ENCODE measurements at regions of chrX and their contacts with region 1.

Region 1: DNA sequence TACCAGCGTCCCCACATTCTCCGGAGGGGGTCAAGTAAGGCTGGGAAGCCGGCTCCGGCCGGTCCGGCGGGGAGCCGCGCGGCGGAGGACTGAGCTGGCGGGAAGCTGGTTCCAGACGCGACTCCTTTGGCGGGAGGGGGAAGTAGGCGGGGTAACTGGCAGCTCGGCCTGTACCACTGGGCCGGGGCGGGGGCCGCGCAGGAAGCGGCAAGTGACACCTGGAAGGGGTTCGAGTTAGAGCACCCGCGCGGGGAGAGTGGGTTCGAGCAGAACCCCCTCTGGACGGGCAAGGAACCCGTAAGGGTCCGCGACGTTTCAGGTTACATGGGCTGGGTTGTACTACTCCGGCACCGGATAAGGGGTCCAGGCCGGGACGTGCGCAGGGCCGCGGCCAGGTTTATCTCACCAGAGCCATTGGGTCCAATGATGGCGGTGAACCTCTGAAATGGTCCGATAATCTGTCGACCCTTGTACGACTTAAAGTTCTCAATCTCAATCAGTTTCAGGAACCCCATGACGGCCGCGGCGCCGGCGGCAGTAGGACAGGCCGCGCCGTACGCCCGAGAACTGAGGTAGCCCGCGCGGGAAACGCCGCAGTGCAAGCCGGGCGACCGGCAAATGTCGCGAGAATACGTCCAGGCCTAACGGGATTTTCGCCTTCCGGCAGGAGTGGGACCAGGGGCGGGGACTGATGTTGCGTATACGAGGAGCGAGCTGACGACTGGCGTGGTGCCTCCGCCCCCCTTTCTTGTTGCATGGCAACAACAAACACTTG is at the start of gene SMC1A:
- DNase-seq: peak; percentile 85 to 99 (median 95)
- ATAC-seq: peak; percentile 87
- H3K4me3 ChIP-seq: peak within 1 kb of the TSS; percentile 93
- H3K4me3 Mint-ChIP-seq: peak within 1 kb of the TSS; percentile 99
- H3K27ac ChIP-seq: peak within 1 kb of the TSS; percentile 90 to 98
- H3K27ac Mint-ChIP-seq: peak within 1 kb of the TSS; percentile 90
- H3K4me1 ChIP-seq: peaks cover 34% of the 10 kb centered on the region
- H3K4me1 Mint-ChIP-seq: peaks cover 28% of the 10 kb centered on the region
- H3K27me3 ChIP-seq: no peaks in the 10 kb centered on the region
- H3K27me3 Mint-ChIP-seq: no peaks in the 10 kb centered on the region
- CTCF ChIP-seq: no peak
- total RNA-seq, gene SMC1A: 25.5 to 28.6 TPM

Region 2: DNA sequence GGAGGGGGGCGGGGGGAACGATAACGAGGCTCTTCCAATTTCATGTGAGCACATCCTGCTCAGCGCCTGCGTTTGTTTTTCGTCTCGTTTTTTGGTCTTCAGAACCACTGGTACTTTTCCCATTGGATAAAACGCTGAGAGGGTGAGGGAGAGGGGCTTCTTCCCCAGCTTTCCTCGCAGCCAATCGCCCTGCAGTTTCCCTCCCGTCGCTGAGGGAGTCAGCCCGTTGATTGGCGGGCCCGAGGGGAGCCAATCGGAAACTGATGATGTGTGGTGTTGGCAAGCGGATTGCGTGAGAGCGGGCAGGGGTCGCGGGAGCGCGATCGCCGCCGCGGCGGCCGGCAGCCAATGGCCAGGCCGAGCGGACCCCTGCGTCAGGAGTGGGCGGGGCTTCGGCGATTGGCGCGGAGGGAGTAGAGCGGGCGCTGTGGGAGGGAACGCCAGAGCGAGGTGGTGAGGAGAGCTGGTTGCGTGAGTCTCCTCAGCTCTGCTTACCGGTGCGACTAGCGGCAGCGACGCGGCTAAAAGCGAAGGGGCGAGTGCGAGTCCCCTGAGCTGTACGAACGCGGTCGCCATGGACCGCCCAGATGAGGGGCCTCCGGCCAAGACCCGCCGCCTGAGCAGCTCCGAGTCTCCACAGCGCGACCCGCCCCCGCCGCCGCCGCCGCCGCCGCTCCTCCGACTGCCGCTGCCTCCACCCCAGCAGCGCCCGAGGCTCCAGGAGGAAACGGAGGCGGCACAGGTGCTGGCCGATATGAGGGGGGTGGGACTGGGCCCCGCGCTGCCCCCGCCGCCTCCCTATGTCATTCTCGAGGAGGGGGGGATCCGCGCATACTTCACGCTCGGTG is 340.1 kb before region 1 on chrX and contains the start of gene TSPYL2:
- CTCF ChIA-PET with region 1: no interaction called
- POLR2A ChIA-PET with region 1: interaction called, 13 read pairs
- intact Hi-C with region 1: no loop called
- DNase-seq: peak; percentile 88 to 97 (median 92)
- ATAC-seq: peak; percentile 85
- H3K4me3 ChIP-seq: peak within 1 kb of the TSS; percentile 77
- H3K4me3 Mint-ChIP-seq: peak within 1 kb of the TSS; percentile 95
- H3K27ac ChIP-seq: peak within 1 kb of the TSS; percentile 59 to 80
- H3K27ac Mint-ChIP-seq: peak within 1 kb of the TSS; percentile 99
- H3K4me1 ChIP-seq: peaks cover 30% of the 10 kb centered on the region
- H3K4me1 Mint-ChIP-seq: peaks cover 62% of the 10 kb centered on the region
- H3K27me3 ChIP-seq: no peaks in the 10 kb centered on the region
- H3K27me3 Mint-ChIP-seq: no peaks in the 10 kb centered on the region
- CTCF ChIP-seq: no peak
- total RNA-seq, gene TSPYL2: 428 to 461 TPM

Region 3: DNA sequence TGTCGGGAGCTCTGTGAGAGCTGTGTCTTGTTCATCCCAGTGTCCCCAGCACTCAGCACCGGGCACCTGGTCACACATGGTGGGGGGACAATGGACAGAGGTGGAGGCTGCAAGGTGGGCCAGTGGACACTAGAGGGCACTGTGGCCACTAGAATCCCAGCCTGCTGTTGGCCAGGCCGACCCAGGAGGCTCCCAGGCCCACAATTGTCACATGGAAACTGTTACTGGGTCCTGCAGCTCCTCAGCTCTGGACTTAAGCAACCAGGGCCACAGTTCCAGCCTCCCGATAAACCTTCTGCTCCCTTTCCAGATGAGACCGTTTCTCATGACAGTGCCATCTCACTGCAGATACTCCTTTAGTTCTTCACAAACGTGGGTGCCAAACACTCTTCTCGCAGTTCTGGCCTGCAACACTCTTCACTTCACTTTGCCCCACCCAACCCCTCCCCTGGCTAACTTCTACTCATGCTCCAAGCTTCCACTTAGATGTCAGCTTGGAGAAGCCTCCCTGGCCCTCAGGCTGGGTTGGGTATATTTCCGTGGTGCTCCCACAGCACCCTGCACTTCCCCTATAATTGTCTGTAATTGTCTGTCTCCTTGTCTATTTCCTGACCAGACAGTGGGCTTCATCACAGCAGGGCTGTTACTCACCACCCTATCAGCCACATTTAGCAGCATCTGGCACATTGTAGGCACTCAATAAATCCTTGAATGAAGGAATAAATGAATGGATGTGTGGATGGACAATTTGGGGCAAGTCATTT is 137.4 kb before region 1 on chrX:
- CTCF ChIA-PET with region 1: interaction called, 3 read pairs
- POLR2A ChIA-PET with region 1: interaction called, 16 read pairs
- intact Hi-C with region 1: no loop called
- DNase-seq: peak in 13 of 14 experiments; percentile 11 to 71 (median 40)
- ATAC-seq: peak; percentile 57
- H3K4me3 ChIP-seq: no peak overlapping the region
- H3K4me3 Mint-ChIP-seq: no peak overlapping the region
- H3K27ac ChIP-seq: no peak overlapping the region
- H3K27ac Mint-ChIP-seq: no peak overlapping the region
- H3K4me1 ChIP-seq: peaks cover 38% of the 10 kb centered on the region
- H3K4me1 Mint-ChIP-seq: peaks cover 37% of the 10 kb centered on the region
- H3K27me3 ChIP-seq: no peaks in the 10 kb centered on the region
- H3K27me3 Mint-ChIP-seq: no peaks in the 10 kb centered on the region
- CTCF ChIP-seq: peak; percentile 66

Region 4: GRCh38 chrX:53445977-53446376 is 23.7 kb after region 1 on chrX:
- CTCF ChIA-PET with region 1: interaction called, 6 read pairs
- POLR2A ChIA-PET with region 1: interaction called, 10 read pairs
- intact Hi-C with region 1: no loop called
- DNase-seq: peak in 12 of 14 experiments; percentile 9 to 62 (median 34)
- ATAC-seq: peak; percentile 46
- H3K4me3 ChIP-seq: no peak overlapping the region
- H3K4me3 Mint-ChIP-seq: no peak overlapping the region
- H3K27ac ChIP-seq: no peak overlapping the region
- H3K27ac Mint-ChIP-seq: no peak overlapping the region
- H3K4me1 ChIP-seq: peaks cover 12% of the 10 kb centered on the region
- H3K4me1 Mint-ChIP-seq: peaks cover 5% of the 10 kb centered on the region
- H3K27me3 ChIP-seq: no peaks in the 10 kb centered on the region
- H3K27me3 Mint-ChIP-seq: no peaks in the 10 kb centered on the region
- CTCF ChIP-seq: peak; percentile 29

Region 5: GRCh38 chrX:54325713-54326112 is 903.4 kb after region 1 on chrX:
- CTCF ChIA-PET with region 1: no interaction called
- POLR2A ChIA-PET with region 1: no interaction called
- intact Hi-C with region 1: no loop called
- DNase-seq: no peak
- ATAC-seq: no peak
- H3K4me3 ChIP-seq: no peak overlapping the region
- H3K4me3 Mint-ChIP-seq: no peak overlapping the region
- H3K27ac ChIP-seq: no peak overlapping the region
- H3K27ac Mint-ChIP-seq: no peak overlapping the region
- H3K4me1 ChIP-seq: no peaks in the 10 kb centered on the region
- H3K4me1 Mint-ChIP-seq: no peaks in the 10 kb centered on the region
- H3K27me3 ChIP-seq: no peaks in the 10 kb centered on the region
- H3K27me3 Mint-ChIP-seq: no peaks in the 10 kb centered on the region
- CTCF ChIP-seq: no peak

Region 6: DNA sequence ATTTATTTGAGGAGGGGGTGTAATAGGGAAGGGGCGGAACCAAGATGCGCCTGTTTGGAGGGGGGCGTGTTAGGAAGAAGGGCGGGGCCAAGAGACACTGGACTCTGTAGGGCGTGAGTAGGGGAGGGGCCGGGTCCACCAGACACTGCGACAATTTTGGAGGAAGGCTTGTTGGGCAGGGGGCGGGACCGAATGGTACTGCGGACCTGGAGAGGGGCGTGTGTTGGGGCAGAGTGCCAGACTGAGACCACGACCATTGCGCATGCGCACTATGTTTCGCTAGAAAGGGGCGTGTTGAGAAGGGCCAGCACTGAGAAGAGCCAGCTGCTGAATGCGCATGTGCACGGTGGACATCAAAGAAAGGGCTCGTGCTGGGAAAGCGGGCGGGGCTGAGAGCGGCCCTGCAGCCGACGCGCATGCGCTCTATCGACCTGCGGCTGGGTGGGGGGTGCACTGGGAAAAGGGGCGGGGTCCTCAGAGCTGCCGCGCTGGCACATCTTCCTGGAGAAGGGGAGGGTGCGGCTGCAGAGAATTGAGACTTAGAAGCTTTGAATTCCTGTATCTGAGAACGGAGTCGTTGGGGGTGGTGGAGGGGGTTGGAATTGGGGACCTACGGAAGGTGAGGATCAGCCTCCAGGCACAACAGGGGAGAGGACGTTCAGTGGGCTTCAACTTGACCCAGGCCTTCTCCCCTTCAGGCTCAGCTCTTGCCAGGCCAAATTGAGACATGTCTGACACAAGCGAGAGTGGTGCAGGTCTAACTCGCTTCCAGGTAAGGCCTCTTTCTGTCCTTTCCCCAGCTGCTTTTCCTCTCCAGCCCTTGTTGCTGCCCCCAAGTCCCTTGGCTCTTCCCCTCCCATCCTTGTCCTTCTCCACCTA is 1386.6 kb after region 1 on chrX:
- CTCF ChIA-PET with region 1: no interaction called
- POLR2A ChIA-PET with region 1: no interaction called
- intact Hi-C with region 1: loop called in 1 of 2 experiments (anchors 5 kb)
- DNase-seq: peak; percentile 75 to 97 (median 84)
- ATAC-seq: peak; percentile 70
- H3K4me3 ChIP-seq: peak overlapping the region; percentile 93
- H3K4me3 Mint-ChIP-seq: peak overlapping the region; percentile 95
- H3K27ac ChIP-seq: peak overlapping the region; percentile 65 to 88
- H3K27ac Mint-ChIP-seq: peak overlapping the region; percentile 98
- H3K4me1 ChIP-seq: peaks cover 25% of the 10 kb centered on the region
- H3K4me1 Mint-ChIP-seq: peaks cover 24% of the 10 kb centered on the region
- H3K27me3 ChIP-seq: no peaks in the 10 kb centered on the region
- H3K27me3 Mint-ChIP-seq: no peaks in the 10 kb centered on the region
- CTCF ChIP-seq: no peak

Measured in CD4-positive, alpha-beta T cell (primary cell).